CD4-positive, alpha-beta memory T cell (primary cell): ENCODE measurements at regions of chr11 and their contacts with region 1.

Region 1: GRCh38 chr11:123020968-123021367 is 39.3 kb upstream of the BSX start:
- DNase-seq: peak in 4 of 5 donors; percentile 21 to 34 (median 26)
- H3K4me3 ChIP-seq: no peak overlapping the region
- H3K4me3 Mint-ChIP-seq: no peak overlapping the region
- H3K27ac ChIP-seq: no peak overlapping the region
- H3K27ac Mint-ChIP-seq: no peak overlapping the region
- H3K4me1 ChIP-seq: peaks cover 8% of the 10 kb centered on the region
- H3K4me1 Mint-ChIP-seq: peaks cover 5 to 8% (median 8%) of the 10 kb centered on the region in 4 donors
- H3K27me3 ChIP-seq: no peaks in the 10 kb centered on the region
- H3K27me3 Mint-ChIP-seq: peaks cover 3 to 4% of the 10 kb centered on the region in 2 donors

Region 2: DNA sequence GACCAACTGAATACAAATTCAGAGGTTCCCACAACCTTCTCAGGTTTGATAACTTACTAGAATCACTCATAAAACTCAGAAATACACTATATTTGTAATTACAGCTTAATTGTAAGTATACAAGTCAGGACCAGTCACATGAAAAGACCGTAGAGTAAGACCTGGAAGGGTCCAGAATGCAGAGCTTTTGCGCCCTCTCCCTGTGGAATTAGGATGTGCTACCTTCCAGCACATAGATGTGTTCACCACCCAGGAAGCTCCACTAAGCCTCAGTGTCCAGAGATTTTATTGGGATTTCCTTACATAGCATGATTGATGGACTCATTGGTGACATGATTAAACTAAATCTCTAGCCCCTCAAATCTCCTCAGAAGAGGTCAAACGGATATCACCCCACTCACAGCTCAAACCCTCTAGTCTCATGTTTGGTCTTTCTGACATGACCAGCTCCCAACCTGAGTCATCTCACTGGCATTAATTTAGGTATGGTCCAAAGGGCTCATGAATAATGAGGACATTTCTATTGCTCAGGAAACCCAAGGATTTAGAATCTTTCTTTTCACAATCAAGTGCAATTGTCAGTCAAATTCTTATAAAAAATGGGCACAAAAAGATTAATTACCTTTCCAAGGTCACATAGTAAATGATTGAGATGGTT is 442.7 kb before region 1 on chr11:
- CTCF ChIA-PET with region 1: interaction called, 4 read pairs
- POLR2A ChIA-PET with region 1: no interaction called
- intact Hi-C with region 1: loop called (anchors 1 kb)
- DNase-seq: no peak
- H3K4me3 ChIP-seq: no peak overlapping the region
- H3K4me3 Mint-ChIP-seq: no peak overlapping the region
- H3K27ac ChIP-seq: no peak overlapping the region
- H3K27ac Mint-ChIP-seq: no peak overlapping the region
- H3K4me1 ChIP-seq: peaks cover 8% of the 10 kb centered on the region
- H3K4me1 Mint-ChIP-seq: peaks cover 5 to 9% (median 9%) of the 10 kb centered on the region in 4 donors
- H3K27me3 ChIP-seq: no peaks in the 10 kb centered on the region
- H3K27me3 Mint-ChIP-seq: peaks cover 2 to 7% of the 10 kb centered on the region in 2 donors

Region 3: GRCh38 chr11:122863704-122864326 is 157.2 kb before region 1 on chr11:
- CTCF ChIA-PET with region 1: interaction called, 193 read pairs
- POLR2A ChIA-PET with region 1: no interaction called
- intact Hi-C with region 1: loop called (anchors 1 kb)
- DNase-seq: peak; percentile 24 to 49 (median 37)
- H3K4me3 ChIP-seq: no peak overlapping the region
- H3K4me3 Mint-ChIP-seq: no peak overlapping the region
- H3K27ac ChIP-seq: no peak overlapping the region
- H3K27ac Mint-ChIP-seq: no peak overlapping the region
- H3K4me1 ChIP-seq: no peaks in the 10 kb centered on the region
- H3K4me1 Mint-ChIP-seq: no peaks in the 10 kb centered on the region
- H3K27me3 ChIP-seq: no peaks in the 10 kb centered on the region
- H3K27me3 Mint-ChIP-seq: peaks cover 19 to 28% of the 10 kb centered on the region in 2 donors

Region 4: DNA sequence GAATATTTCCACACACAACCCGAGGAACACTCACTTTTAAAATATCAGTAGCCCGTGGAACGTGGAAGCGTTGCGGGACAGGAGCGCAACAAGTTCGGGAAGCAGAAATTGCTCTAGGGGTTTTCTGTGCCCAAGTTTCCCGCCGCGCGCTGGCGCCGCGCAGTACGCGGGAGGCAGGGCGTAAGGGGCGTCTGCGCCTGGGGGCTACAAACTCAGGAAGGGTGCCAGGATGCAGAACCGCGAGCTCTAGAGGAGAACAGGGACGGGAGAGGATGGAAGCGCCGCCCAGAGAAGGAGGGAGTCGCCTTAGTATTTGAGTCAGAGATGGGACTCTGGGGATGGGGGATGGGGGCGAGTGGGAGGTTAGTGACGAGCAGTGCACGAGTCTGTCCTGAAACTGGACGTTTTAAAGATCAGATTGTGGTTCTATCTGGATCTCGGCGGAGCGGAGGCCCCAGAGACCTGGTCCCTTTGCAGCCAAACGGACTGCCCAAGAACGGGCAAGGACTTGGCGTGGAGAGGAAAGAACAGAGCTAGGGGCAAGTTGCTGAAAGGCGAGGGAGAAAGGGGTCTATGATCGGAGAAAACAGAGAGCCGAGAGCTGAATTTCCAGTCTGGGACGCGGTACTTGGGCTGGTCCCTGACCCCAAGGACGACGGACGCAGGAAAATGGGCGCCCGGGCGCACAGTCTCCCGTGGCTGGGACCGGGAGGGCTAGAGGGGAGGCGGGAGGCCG is 44.1 kb before region 1 on chr11:
- CTCF ChIA-PET with region 1: no interaction called
- POLR2A ChIA-PET with region 1: no interaction called
- intact Hi-C with region 1: no loop called
- DNase-seq: no peak
- H3K4me3 ChIP-seq: no peak overlapping the region
- H3K4me3 Mint-ChIP-seq: peak overlapping the region in 5 of 8 donors; percentile 24 to 74 (median 62)
- H3K27ac ChIP-seq: no peak overlapping the region
- H3K27ac Mint-ChIP-seq: peak overlapping the region in 1 of 7 donors; percentile 31
- H3K4me1 ChIP-seq: peaks cover 10% of the 10 kb centered on the region
- H3K4me1 Mint-ChIP-seq: peaks cover 17 to 45% (median 28%) of the 10 kb centered on the region in 4 donors
- H3K27me3 ChIP-seq: peaks cover 49% of the 10 kb centered on the region
- H3K27me3 Mint-ChIP-seq: peaks cover 70 to 73% of the 10 kb centered on the region in 2 donors

Region 5: GRCh38 chr11:123033895-123034294 is 12.9 kb after region 1 on chr11:
- CTCF ChIA-PET with region 1: interaction called, 25 read pairs
- POLR2A ChIA-PET with region 1: no interaction called
- intact Hi-C with region 1: no loop called
- DNase-seq: no peak
- H3K4me3 ChIP-seq: no peak overlapping the region
- H3K4me3 Mint-ChIP-seq: no peak overlapping the region
- H3K27ac ChIP-seq: no peak overlapping the region
- H3K27ac Mint-ChIP-seq: no peak overlapping the region
- H3K4me1 ChIP-seq: no peaks in the 10 kb centered on the region
- H3K4me1 Mint-ChIP-seq: peaks cover 0 to 2% (median 0%) of the 10 kb centered on the region in 4 donors
- H3K27me3 ChIP-seq: no peaks in the 10 kb centered on the region
- H3K27me3 Mint-ChIP-seq: peaks cover 2 to 3% of the 10 kb centered on the region in 2 donors

Region 6: GRCh38 chr11:123054301-123055065 is 33.5 kb after region 1 on chr11:
- CTCF ChIA-PET with region 1: interaction called, 99 read pairs
- POLR2A ChIA-PET with region 1: interaction called, 6 read pairs
- intact Hi-C with region 1: no loop called
- DNase-seq: peak; percentile 65 to 72 (median 69)
- H3K4me3 ChIP-seq: no peak overlapping the region
- H3K4me3 Mint-ChIP-seq: peak overlapping the region in 6 of 8 donors; percentile 52 to 100 (median 86)
- H3K27ac ChIP-seq: no peak overlapping the region
- H3K27ac Mint-ChIP-seq: peak overlapping the region; percentile 61 to 97 (median 87)
- H3K4me1 ChIP-seq: peaks cover 56% of the 10 kb centered on the region
- H3K4me1 Mint-ChIP-seq: peaks cover 46 to 62% (median 51%) of the 10 kb centered on the region in 4 donors
- H3K27me3 ChIP-seq: no peaks in the 10 kb centered on the region
- H3K27me3 Mint-ChIP-seq: no peaks in the 10 kb centered on the region